Heart right ventricle (tissue), 16 donors: ENCODE measurements at regions of chr17 and their contacts with region 1.

Region 1: DNA sequence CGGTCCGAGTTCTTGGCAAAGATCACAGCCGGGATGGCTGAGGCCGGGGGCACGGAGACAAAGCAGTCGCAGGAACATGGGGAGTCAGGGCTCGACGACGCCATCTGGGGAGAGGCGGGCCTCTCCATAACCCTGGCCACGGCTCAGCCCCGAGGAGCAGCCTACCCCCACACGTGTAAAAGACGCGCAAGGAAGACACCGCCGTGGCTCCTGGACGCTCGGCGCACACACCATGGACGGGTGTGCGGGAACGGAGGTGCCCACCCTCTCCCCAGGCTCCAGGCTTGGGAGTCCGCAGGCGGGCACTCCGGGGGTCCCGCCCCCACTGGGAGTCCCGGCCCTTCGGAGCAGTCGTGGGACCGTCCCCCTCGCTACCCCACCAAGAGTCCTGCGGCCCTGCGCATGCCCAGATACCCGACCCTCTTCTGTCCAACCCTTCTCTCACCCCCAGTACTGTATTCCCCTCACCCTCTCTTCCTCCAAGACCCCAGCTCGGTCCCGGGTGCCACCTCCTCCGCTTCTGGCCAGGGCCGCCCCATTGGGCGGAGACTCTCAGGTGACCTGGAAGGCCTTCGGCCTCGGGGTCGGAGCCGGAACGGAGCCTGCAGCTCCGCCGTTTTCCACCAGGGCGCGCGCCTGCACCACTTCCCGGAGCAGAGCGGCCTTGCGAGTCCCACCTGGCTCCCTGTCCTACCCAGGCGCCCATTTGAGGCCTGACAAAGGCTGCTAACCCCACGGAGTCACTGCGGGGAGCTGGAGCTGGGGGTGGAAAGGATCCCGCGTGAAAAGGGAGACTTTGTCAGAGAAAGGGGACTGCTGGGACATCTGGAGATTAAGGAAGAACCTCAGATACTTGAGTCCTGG is at the start of gene SCRN2:
- DNase-seq: peak; percentile 91 to 94
- ATAC-seq: peak; percentile 88 to 97 (median 95)
- H3K4me3 ChIP-seq: peak within 1 kb of the TSS; percentile 63 to 92 (median 75)
- H3K27ac ChIP-seq: peak within 1 kb of the TSS in 9 of 10 donors; percentile 65 to 89 (median 77)
- H3K4me1 ChIP-seq: peaks cover 0 to 42% (median 21%) of the 10 kb centered on the region in 9 donors
- H3K27me3 ChIP-seq: peaks cover 0 to 21% (median 16%) of the 10 kb centered on the region in 7 donors
- CTCF ChIP-seq: peak; percentile 91 to 99 (median 97)
- total RNA-seq, gene SCRN2: 25.6 to 38.2 (median 34.5) TPM

Region 2: GRCh38 chr17:47889734-47890529 is 49.0 kb after region 1 on chr17:
- intact Hi-C with region 1: loop called (anchors 1 to 2 kb)
- DNase-seq: peak; percentile 87 to 89
- ATAC-seq: peak; percentile 85 to 94 (median 92)
- H3K4me3 ChIP-seq: no peak overlapping the region
- H3K27ac ChIP-seq: no peak overlapping the region
- H3K4me1 ChIP-seq: peaks cover 0 to 17% (median 8%) of the 10 kb centered on the region in 9 donors
- H3K27me3 ChIP-seq: no peaks in the 10 kb centered on the region
- CTCF ChIP-seq: peak; percentile 93 to 98 (median 96)

Region 3: DNA sequence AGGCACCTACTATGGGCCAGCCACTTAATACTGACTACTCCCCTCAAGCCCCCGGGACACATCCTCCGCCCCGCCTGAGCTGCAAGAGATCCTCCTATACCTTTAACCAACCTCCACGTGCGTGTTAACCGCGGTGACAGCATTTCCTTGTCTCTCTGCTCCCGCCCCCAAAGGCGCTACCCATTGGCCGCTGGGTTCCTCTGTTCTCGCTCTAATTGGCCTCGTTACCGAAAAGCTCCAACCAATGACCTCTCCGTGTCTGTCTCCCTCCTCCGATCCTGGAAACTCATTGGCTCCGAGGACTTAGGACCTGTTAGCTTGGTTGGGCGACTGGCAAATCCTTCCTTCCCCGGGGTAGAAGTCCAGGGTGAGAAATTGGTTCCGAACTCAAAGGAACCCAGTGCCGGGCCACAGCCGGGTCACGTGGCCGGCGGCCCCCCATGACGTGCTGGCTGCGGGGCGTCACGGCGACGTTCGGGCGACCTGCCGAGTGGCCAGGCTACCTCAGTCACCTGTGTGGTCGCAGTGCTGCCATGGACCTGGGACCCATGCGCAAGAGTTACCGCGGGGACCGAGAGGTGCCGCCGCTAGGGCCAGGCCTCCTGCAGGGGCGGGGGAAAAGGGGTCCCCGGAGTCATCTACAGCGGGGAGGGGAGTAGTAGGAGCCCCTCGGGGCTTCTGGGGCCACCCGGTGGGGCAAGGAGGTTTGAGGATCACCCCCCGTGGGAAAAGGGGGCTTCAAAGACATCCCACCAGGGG is 100.4 kb after region 1 on chr17 and contains the start of gene PNPO:
- intact Hi-C with region 1: loop called in 8 of 10 experiments (anchors 2 to 10 kb)
- DNase-seq: peak; percentile 87 to 96
- ATAC-seq: peak; percentile 96 to 99 (median 98)
- H3K4me3 ChIP-seq: peak within 1 kb of the TSS; percentile 63 to 99 (median 86)
- H3K27ac ChIP-seq: peak within 1 kb of the TSS in 9 of 10 donors; percentile 78 to 90 (median 84)
- H3K4me1 ChIP-seq: peaks cover 0 to 43% (median 30%) of the 10 kb centered on the region in 9 donors
- H3K27me3 ChIP-seq: no peaks in the 10 kb centered on the region
- CTCF ChIP-seq: peak in 2 of 9 donors; percentile 10 to 14
- total RNA-seq, gene PNPO: 22.8 to 37.0 (median 31.5) TPM

Region 4: DNA sequence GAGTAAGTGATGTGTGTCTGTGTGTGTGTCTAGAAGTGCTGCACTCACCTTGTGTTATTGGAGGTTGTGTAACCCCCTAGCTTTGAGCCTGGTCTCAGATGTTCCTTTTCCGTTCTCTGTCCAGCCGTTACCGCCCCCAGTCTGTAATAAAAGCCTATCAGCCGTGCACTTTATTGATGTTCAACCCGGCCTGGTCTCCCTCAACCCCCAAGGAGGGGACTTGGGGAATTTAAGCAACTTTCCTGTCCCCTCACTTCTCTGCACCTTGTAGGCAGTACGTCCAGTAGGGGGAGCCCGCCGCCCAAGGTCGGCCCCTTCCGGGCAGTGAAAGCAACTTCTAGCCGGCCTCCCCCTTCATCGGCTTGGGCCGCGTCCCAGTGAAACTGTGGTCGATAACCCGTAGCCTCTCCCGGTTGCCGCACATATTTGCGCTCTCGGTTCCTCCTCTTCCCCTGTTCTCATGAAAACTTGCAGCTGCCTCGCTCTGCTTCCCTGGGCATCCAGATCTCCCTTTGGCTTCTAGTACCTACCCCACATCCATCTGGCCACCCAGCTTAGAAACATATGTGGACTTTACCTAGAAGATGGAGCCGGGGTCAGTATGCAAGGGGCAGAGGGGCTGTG is 108.3 kb after region 1 on chr17:
- intact Hi-C with region 1: loop called in 8 of 10 experiments (anchors 2 to 10 kb)
- DNase-seq: peak; percentile 88 to 92
- ATAC-seq: peak; percentile 78 to 93 (median 88)
- H3K4me3 ChIP-seq: peak overlapping the region in 8 of 10 donors; percentile 15 to 49 (median 37)
- H3K27ac ChIP-seq: peak overlapping the region in 9 of 10 donors; percentile 58 to 83 (median 68)
- H3K4me1 ChIP-seq: peaks cover 5 to 47% (median 30%) of the 10 kb centered on the region in 9 donors
- H3K27me3 ChIP-seq: no peaks in the 10 kb centered on the region
- CTCF ChIP-seq: peak; percentile 73 to 97 (median 93)

Region 5: DNA sequence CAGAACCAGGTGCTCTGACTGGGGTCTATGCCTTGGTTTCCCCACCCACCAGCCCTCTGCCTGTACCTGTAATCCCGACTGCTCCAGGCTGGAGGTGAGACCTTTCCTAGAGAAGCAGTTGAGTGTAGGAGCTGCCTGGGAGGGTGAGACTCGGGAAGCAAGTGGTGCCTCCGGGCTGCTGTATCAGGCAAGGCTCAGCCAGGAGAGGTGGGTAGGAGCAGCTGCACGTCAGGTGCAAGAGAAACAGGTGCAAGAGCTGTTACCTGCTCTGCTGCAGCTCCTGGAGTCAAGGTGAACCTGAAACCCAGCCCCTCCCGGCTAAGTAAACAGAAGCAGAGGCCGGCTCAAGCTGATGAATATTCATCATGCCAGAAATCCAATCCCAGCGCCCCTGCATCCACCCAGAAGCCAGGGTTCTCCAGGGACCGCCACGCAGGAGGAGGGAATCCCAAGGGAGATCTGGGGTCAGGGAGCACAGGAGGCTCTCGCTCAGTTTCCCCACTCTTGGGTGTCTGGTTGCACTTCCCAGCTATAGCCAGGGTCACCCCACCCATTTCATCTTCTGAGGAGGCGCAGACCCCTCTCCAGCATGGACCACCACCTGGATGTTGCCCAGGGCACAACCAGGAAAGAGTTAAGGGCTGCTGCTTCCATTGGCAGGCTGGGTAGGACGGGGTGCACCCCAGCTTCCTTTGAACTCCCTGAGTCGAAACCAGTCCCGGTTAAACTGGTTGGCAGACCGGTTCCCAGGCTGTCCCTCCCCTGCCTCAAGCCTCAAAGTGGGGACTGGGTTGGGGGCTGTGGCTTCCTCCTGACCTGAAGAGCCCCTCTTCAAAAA is 116.8 kb after region 1 on chr17 and contains the start of gene PRR15L:
- intact Hi-C with region 1: loop called in 2 of 10 experiments (anchors 5 to 10 kb)
- DNase-seq: no peak
- ATAC-seq: no peak
- H3K4me3 ChIP-seq: no peak within 1 kb of the TSS
- H3K27ac ChIP-seq: no peak within 1 kb of the TSS
- H3K4me1 ChIP-seq: no peaks in the 10 kb centered on the region
- H3K27me3 ChIP-seq: no peaks in the 10 kb centered on the region
- CTCF ChIP-seq: no peak
- total RNA-seq, gene PRR15L: not detected

Region 6: DNA sequence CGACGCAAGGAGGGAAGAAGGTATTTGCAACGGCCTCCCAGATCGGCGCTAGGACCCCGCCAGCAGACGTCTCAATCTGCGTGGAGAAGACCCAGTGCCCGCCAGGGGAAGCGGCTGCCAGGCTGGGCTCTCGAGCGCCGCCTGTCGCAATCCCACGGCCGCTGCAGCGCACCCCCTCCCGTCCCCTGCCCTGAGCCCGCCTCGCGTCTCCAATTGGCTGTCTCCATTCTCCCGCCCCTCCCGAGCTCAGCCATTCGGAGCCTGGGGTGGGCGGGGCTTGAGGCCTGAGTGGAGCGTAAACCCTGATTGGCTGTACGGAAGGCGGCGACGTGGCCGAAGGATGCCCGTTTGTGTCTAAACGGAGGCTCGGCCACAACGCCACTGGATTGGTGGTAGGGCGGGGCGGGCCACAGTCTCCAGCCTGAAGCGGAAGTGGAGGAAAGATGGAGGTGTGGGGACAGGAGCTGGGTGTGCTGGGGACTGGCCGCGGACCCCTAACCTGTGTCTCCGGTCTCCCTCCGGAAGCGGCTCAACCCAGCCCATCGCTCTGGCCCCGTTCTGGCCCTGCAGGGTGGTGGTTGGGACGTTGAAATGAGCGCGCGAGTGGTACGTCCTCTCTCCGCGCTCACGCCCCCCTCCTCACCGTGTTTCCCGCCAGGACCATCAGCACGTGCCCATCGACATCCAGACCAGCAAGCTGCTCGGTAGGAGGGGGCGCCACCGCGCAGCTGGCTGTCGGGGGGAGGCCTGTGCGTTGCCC is 129.9 kb after region 1 on chr17 and contains the start of gene CDK5RAP3:
- intact Hi-C with region 1: loop called in 7 of 10 experiments (anchors 2 to 10 kb)
- DNase-seq: peak; percentile 100
- ATAC-seq: peak; percentile 99 to 100 (median 100)
- H3K4me3 ChIP-seq: peak within 1 kb of the TSS; percentile 62 to 98 (median 92)
- H3K27ac ChIP-seq: peak within 1 kb of the TSS in 9 of 10 donors; percentile 47 to 91 (median 84)
- H3K4me1 ChIP-seq: peaks cover 4 to 24% (median 15%) of the 10 kb centered on the region in 9 donors
- H3K27me3 ChIP-seq: no peaks in the 10 kb centered on the region
- CTCF ChIP-seq: peak in 8 of 9 donors; percentile 88 to 100 (median 96)
- total RNA-seq, gene CDK5RAP3: 44.0 to 71.2 (median 62.3) TPM

Region 7: GRCh38 chr17:48011405-48012150 is 170.6 kb after region 1 on chr17:
- intact Hi-C with region 1: loop called in 7 of 10 experiments (anchors 5 to 10 kb)
- DNase-seq: no peak
- ATAC-seq: peak in 5 of 8 donors; percentile 25 to 62 (median 44)
- H3K4me3 ChIP-seq: peak overlapping the region in 9 of 10 donors; percentile 23 to 52 (median 42)
- H3K27ac ChIP-seq: no peak overlapping the region
- H3K4me1 ChIP-seq: peaks cover 0 to 13% (median 10%) of the 10 kb centered on the region in 9 donors
- H3K27me3 ChIP-seq: peaks cover 0 to 66% (median 59%) of the 10 kb centered on the region in 7 donors
- CTCF ChIP-seq: peak in 5 of 9 donors; percentile 4 to 52 (median 33)